Ovary (tissue), 10 donors: ENCODE measurements at regions of chr10 and their contacts with region 1.

Region 1: DNA sequence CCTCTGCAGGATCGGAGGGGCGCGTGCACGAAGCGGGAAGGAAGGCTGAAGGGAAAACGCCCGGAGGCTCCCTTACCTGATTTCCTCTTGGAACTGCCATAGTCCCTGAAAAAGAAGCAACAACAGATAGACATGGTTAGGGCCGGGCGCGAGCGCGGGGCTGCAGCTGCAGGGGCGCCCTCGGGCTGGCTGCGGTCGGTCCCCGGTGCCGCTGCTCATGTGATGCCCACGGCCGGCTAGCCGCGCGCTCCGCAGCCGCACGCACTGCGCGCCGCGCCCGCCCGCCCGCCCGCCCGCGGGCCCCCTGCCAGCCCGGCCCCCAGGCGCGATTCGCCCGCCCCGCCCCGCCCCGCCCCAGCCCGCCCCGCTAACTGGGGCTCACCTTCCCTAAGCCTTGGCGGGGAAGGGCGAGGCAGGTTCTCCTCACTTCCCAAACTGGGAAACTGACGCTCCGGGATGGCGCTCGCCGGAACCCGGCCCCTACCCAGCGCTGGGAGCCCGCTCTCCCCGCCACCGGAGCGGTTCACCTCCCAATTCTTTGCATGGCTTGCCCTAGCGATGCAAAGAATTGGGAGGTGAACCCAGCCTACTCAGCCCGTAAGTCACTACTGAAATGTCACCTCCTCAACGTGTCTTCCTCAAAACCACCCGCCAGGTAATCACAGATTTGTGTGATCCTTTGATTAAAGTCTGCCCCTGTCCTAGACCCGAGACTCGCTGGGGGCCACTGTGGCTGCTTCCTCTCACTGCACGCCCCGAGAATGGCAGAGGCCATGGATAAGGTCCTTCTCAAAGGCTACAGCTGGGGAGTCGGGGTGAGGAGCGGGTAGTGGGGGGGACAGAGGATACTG is 162.2 kb downstream of the SH3PXD2A start:
- DNase-seq: peak in 3 of 5 donors; percentile 44 to 63 (median 50)
- H3K4me3 ChIP-seq: peak overlapping the region; percentile 33
- H3K27ac ChIP-seq: no peak overlapping the region
- H3K4me1 ChIP-seq: peaks cover 5% of the 10 kb centered on the region
- H3K27me3 ChIP-seq: no peaks in the 10 kb centered on the region
- CTCF ChIP-seq: no peak
- EP300 ChIP-seq: no peak
- POLR2A ChIP-seq: no peak

Region 2: DNA sequence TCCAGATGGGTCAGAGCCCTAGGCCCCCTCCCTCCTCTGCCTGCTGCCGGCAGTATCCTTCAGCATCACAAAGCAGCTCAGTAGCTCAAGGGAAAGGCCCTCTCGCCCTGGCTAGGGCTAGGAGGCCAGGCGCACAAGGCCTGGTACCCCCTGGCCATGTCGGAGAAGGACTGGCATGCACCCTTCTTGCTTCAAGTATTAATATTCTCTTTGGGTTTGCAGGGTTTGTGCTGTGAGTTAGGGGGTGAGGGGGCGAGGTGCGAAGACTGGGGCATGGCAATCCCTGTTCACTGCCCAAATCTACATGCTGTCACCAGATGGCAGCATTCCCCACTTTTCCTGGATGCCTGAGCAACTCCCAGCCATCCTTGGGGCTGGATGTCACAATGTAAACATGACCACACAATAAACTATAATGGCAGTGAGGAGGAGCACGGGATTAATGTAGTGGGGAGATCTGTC is 94.5 kb before region 1 on chr10:
- intact Hi-C with region 1: loop called in 3 of 4 experiments (anchors 2 to 5 kb)
- DNase-seq: peak; percentile 57 to 78 (median 70)
- H3K4me3 ChIP-seq: no peak overlapping the region
- H3K27ac ChIP-seq: no peak overlapping the region
- H3K4me1 ChIP-seq: peaks cover 11% of the 10 kb centered on the region
- H3K27me3 ChIP-seq: no peaks in the 10 kb centered on the region
- CTCF ChIP-seq: peak; percentile 49 to 83 (median 74)
- EP300 ChIP-seq: no peak
- POLR2A ChIP-seq: no peak

Region 3: DNA sequence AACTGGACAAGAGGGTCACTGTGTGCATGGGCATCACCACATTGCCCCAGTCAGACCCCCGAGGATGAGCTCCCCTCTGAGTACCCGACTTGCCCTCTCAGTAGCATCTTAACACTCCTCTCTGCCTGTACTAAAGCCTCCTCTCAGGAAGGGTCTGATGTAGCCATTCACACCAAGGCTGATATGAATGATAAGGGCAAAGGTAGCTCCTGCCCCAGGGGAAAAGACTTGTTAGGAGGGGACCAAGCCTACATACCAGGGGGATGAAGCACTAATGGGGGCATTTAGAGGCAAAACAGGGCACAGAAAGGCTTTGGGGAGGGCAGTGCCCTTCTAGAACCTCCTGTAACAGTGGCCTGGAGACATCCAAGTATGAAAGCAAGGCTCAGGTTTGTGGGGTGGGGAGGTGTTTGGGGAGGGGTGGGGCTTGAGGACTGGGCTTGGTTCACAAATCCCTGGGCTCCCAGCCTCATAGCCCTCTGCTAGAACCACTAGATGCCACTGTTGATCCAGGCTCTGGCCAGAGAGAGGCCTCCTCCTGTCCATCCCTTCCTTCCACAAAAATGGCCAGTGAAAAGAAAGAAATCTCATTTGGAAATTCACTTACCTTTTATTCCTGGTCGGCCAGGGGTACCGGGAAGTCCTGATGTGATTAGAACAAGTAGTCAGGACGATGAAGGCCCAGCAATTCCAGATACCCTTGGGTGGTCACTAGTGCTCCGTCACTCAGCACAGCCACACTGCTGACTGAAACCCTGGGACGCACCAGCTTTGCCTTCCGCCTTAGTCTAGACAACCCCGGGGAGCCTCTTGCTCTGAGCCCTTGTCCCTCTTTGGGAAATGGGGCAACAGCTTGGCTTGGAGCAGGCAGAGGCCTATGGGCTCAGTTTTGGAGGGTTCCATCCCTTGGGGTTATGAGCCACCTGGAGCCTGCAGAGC is 352.2 kb after region 1 on chr10:
- intact Hi-C with region 1: no loop called
- DNase-seq: peak in 3 of 5 donors; percentile 33 to 39 (median 38)
- H3K4me3 ChIP-seq: no peak overlapping the region
- H3K27ac ChIP-seq: no peak overlapping the region
- H3K4me1 ChIP-seq: no peaks in the 10 kb centered on the region
- H3K27me3 ChIP-seq: no peaks in the 10 kb centered on the region
- CTCF ChIP-seq: peak in 1 of 3 donors; percentile 23
- EP300 ChIP-seq: no peak
- POLR2A ChIP-seq: no peak